ENCODE measurements at regions of chr1 and their contacts with region 1.

Region 1: GRCh38 chr1:172460887-172461315 is 17.0 kb upstream of the PIGC start:
- DNase-seq: no peak
- H3K27ac ChIP-seq: no peak overlapping the region
- CTCF ChIP-seq: no peak

Region 2: DNA sequence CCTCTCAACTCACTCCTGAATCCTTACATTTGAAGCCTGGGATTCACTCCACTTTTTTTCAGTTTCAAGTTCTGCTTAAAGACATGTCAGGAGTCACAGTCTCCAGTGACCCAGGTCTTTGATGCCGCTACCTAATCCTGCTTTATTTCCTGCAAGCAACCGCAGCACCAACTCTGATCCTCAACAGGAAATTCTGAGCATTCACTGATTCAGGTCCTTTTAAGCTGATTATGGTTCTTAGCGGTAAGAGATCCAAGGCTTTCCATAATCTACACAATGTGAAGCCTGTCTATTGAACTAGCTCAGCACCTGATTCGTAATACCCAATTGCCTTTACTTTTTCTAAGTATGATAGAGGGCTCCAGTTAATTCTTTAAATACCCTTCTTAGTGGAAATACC is 26.6 kb after region 1 on chr1:
- CTCF ChIA-PET with region 1: no interaction called
- POLR2A ChIA-PET with region 1: no interaction called
- DNase-seq: no peak
- H3K27ac ChIP-seq: no peak overlapping the region
- CTCF ChIP-seq: no peak

Region 3: DNA sequence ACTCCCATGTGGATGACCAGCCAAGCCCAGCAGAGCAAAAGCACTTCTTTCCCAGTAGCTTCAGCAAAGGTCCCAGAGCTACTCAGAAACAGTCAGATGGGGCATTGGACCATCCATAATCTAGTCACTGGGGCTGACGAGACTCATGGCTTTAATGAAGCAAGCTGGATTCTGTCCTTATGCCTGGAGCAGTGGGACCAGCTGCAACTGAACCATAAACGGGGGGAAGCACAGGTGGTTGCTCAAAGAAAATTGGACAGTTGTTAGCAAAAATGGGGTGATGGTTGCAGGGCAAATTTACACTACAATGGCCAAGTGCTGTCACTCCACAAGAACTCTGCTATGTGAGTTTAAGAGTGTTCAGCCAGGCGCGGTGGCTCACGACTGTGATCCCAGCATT is 180.6 kb after region 1 on chr1:
- CTCF ChIA-PET with region 1: interaction called, 11 read pairs
- POLR2A ChIA-PET with region 1: no interaction called
- DNase-seq: no peak
- H3K27ac ChIP-seq: no peak overlapping the region
- CTCF ChIP-seq: no peak